ENCODE measurements at regions of chr22 and their contacts with region 1.

Region 1: DNA sequence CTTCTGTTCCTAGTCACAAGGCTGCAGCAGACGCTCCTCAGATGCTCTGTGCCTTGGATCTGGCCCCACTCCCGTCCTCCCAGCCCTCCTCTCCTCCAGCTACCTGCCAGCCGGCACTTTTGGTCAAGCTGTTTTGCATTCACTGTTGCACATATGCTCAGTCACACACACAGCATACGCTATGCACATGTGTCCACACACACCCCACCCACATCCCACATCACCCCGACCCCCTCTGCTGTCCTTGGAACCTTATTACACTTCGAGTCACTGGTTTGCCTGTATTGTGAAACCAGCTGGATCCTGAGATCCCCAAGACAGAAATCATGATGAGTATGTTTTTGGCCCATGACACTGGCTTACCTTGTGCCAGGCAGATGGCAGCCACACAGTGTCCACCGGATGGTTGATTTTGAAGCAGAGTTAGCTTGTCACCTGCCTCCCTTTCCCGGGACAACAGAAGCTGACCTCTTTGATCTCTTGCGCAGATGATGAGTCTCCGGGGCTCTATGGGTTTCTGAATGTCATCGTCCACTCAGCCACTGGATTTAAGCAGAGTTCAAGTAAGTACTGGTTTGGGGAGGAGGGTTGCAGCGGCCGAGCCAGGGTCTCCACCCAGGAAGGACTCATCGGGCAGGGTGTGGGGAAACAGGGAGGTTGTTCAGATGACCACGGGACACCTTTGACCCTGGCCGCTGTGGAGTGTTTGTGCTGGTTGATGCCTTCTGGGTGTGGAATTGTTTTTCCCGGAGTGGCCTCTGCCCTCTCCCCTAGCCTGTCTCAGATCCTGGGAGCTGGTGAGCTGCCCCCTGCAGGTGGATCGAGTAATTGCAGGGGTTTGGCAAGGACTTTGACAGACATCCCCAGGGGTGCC is 109.8 kb downstream of the BCR start:
- DNase-seq: peak; percentile 69
- ATAC-seq: peak; percentile 85
- H3K4me3 Mint-ChIP-seq: no peak overlapping the region
- H3K27ac Mint-ChIP-seq: no peak overlapping the region
- H3K4me1 Mint-ChIP-seq: no peaks in the 10 kb centered on the region
- H3K27me3 Mint-ChIP-seq: no peaks in the 10 kb centered on the region
- CTCF ChIP-seq: peak; percentile 89

Region 2: DNA sequence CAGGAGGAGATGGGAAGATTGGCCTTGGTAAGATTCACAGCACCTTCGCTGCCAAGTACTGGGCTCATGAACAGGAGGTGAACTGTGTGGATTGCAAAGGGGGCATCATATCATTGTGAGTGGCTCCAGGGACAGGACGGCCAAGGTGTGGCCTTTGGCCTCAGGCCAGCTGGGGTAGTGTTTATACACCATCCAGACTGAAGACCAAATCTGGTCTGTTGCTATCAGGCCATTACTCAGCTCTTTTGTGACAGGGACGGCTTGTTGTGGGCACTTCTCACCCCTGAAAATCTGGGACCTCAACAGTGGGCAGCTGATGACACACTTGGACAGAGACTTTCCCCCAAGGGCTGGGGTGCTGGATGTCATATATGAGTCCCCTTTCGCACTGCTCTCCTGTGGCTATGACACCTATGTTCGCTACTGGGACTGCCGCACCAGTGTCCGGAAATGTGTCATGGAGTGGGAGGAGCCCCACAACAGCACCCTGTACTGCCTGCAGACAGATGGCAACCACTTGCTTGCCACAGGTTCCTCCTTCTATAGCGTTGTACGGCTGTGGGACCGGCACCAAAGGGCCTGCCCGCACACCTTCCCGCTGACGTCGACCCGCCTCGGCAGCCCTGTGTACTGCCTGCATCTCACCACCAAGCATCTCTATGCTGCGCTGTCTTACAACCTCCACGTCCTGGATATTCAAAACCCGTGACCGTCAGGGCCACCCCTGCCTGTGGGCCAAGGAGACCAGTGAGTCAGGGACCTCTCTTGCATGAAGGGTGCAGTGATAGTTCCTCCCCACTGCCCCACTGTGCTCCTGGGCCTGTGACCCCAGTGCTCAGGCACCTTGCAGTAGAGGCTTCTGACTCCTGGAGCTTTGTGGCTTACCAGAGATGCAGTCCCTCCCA is 26.2 kb before region 1 on chr22:
- CTCF ChIA-PET with region 1: interaction called, 10 read pairs
- POLR2A ChIA-PET with region 1: no interaction called
- intact Hi-C with region 1: no loop called
- DNase-seq: peak; percentile 64
- ATAC-seq: peak; percentile 94
- H3K4me3 Mint-ChIP-seq: no peak overlapping the region
- H3K27ac Mint-ChIP-seq: peak overlapping the region; percentile 30
- H3K4me1 Mint-ChIP-seq: no peaks in the 10 kb centered on the region
- H3K27me3 Mint-ChIP-seq: no peaks in the 10 kb centered on the region
- CTCF ChIP-seq: no peak